SK-N-SH (cell line): ENCODE measurements at regions of chr20 and their contacts with region 1.

Region 1: DNA sequence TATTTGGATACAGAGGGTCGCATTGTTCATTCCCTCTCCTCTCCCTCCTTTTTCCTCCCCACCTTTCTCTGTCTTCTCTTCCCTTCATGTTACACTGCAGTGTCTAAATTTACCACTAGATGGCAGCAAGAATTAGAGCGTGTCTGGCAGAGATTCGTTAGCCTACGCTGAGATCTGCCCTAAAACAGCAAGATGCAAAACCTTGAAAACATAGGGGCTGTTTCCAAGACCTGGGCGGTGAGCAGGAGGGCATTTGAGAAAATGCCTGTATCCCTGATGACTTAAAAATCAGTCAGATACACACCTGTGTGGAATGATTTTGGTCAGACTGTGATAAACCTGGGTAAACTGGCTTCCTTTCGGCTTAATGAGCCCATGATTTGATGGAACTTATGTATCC is 101.5 kb upstream of the ISM1 start:
- DNase-seq: peak; percentile 51
- H3K4me3 ChIP-seq: peak overlapping the region in 1 of 2 experiments; percentile 13; a peak in 1 of 4 replicates
- H3K27ac ChIP-seq: no peak overlapping the region
- H3K4me1 ChIP-seq: no peaks in the 10 kb centered on the region
- H3K27me3 ChIP-seq: no peaks in the 10 kb centered on the region
- CTCF ChIP-seq: peak; percentile 88
- EP300 ChIP-seq: no peak
- RAD21 ChIP-seq: peak; percentile 90

Region 2: DNA sequence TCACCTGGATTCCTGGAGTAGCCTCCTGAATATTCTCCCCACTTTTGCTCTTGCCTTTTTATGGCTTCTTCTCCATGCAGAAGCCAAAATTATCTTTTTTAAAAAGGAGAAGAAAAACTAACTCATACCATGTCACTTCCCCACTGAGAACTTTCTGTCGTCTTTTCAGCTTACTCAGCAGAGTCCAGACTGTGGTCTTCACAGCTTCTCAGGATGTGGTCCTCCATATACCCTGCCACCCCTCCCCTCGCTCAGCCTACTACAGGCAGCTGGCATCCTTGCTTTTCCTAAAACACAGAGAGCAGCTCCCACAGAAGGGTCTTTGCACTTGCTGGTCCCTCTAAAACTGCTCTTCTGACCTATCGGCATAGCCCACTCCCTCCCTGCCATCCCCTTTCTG is 12.1 kb after region 1 on chr20:
- CTCF ChIA-PET with region 1: interaction called, 16 read pairs
- POLR2A ChIA-PET with region 1: no interaction called
- DNase-seq: no peak
- H3K4me3 ChIP-seq: no peak overlapping the region
- H3K27ac ChIP-seq: no peak overlapping the region
- H3K4me1 ChIP-seq: no peaks in the 10 kb centered on the region
- H3K27me3 ChIP-seq: no peaks in the 10 kb centered on the region
- CTCF ChIP-seq: no peak
- EP300 ChIP-seq: no peak
- RAD21 ChIP-seq: no peak